Ascending aorta (tissue), 2 donors: ENCODE measurements at regions of chr11 and their contacts with region 1.

Region 1: DNA sequence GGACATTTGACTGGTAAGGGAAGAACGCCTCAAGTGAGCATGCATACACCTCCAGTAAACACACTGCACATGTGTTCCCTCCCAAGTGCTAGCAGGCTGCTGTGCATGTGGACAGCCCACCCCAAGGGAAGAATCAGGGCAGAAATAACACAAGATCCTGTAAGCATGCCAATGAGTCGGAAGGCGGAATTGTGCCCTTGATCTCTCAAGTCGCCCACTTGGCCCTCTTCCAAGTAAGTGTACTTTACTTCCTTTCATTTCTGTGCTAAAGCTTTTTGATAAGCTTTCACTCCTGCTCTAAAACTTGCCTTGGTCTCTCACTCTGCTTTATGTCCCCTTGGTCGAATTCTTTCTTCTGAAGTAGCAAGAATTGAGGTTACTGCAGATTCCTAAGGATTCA is 139.6 kb downstream of the TRPC6 start:
- DNase-seq: no peak
- H3K4me3 ChIP-seq: no peak overlapping the region
- H3K27ac ChIP-seq: no peak overlapping the region
- H3K4me1 ChIP-seq: peaks cover 14 to 16% of the 10 kb centered on the region in 2 donors
- H3K27me3 ChIP-seq: no peaks in the 10 kb centered on the region
- CTCF ChIP-seq: no peak

Region 2: DNA sequence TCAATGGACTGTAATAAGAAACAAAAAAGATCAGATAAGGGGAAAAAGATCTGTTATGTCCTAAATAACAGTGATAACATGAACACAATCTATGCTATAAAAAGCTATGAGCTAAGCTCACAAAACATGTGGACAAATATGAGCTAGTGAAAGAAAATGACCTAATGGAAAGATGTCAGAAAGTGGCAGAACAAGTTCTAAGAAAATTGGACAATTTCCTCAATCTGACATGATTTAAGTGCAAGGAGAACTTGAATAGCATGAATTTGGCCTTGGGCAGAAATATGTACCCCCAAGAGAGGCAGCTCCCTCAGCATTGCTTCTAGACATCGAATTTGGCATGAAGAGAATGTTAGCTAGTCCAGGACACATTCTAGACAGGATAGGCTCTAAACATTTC is 102.6 kb before region 1 on chr11:
- intact Hi-C with region 1: loop called (anchors 5 kb)
- DNase-seq: no peak
- H3K4me3 ChIP-seq: no peak overlapping the region
- H3K27ac ChIP-seq: peak overlapping the region; percentile 59 to 76
- H3K4me1 ChIP-seq: peaks cover 0 to 11% of the 10 kb centered on the region in 2 donors
- H3K27me3 ChIP-seq: no peaks in the 10 kb centered on the region
- CTCF ChIP-seq: no peak

Region 3: GRCh38 chr11:101390539-101390938 is 53.6 kb before region 1 on chr11:
- intact Hi-C with region 1: no loop called
- DNase-seq: no peak
- H3K4me3 ChIP-seq: no peak overlapping the region
- H3K27ac ChIP-seq: no peak overlapping the region
- H3K4me1 ChIP-seq: no peaks in the 10 kb centered on the region
- H3K27me3 ChIP-seq: no peaks in the 10 kb centered on the region
- CTCF ChIP-seq: peak in 1 of 3 experiments; percentile 23

Region 4: DNA sequence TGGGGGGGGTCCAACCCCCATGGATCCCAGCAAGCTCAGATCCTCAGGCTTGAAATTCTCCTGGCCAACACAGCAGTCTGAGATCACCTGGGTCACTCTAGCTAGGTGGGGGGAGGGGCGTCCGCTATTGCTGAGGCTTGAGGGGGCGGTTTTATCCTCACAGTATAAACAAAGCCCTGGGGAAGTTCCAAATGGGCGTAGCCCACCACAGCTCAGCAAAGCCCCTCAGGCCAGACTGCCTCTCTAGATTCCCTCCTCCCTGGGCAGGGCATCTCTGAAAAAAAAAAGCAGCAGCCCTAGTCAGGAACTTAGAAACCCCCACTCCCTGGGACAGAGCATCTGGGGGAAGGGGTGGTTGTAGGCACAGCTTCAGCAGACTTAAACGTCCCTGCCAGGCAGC is 122.9 kb after region 1 on chr11:
- intact Hi-C with region 1: no loop called
- DNase-seq: no peak
- H3K4me3 ChIP-seq: no peak overlapping the region
- H3K27ac ChIP-seq: no peak overlapping the region
- H3K4me1 ChIP-seq: no peaks in the 10 kb centered on the region
- H3K27me3 ChIP-seq: no peaks in the 10 kb centered on the region
- CTCF ChIP-seq: no peak